Common myeloid progenitor, CD34-positive (primary cell): ENCODE measurements at regions of chr9 and their contacts with region 1.

Region 1: DNA sequence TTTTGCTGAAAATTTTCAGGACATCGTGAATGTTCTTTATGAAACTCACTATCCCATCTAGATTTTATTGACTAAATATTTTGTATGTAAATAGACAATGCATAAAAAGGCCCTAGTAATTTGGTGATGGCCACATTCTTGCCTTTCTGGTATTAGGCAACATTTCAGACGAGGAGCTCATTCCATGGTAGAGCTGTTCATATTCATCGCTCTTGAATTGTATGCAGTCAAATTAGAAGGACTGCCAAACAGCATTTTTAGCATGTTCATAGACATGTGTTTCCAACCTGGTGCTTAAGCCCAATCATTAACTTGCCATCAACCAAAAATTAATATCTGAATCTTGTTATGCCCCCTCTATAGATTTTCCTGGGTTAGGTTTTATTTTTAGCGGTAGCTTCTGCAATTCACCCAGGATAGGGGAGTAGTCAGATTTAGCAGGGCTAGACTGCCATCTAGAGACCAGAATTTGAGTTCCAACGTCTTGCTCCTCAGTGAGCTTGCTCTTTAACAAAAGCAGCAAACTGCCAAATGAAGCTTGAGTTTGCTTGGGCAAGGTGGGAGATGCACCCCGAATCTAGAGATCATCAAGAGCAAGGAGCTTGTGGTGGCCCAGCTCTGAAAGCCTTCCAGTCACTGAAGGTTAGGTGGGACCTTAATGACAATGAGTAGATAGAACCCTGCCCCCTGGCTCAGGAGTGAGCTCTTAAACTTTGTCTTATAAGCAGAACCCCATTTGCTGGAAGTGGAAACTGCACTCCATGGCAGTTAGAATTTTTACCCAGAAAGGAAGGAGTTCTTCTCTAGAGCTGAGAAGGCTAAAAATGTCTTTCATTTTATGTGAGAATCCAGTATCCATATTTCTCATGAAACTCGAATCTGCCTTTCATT is 456.2 kb downstream of the RASEF start:
- DNase-seq: peak; percentile 63 to 82 (median 77)
- H3K4me3 ChIP-seq: no peak overlapping the region
- H3K27ac ChIP-seq: no peak overlapping the region
- H3K4me1 ChIP-seq: no peaks in the 10 kb centered on the region
- H3K27me3 ChIP-seq: no peaks in the 10 kb centered on the region

Region 2: DNA sequence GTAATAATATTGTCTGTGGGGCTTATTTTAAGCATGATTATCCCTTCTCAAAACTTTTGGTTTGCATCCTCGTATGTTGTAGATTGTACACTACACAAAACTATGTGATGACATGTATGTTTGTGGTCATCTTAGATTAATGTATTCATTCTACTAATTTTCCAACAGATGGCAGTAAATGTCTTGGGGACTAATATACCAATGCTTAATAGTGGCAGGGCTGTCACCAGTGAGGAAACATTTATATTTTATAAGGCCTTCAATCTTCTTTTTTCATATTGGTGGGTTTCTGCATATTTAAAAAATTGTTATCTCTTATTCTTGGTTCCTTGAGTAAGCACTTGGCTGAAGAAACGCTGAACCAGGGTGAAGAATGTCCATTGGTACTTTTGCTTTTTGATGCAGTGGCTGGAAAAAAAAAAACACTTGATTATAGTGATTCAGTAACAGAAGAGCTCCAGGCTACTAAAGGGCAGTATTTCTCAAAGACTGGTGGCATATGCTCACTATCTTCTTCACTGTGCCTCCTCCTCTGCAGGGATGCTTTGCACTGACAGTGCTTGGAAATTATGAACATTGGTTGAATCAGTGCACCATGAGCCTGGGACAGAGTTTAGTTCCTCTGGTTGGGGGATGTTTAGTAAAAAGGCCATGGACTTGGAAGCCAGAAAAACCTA is 74.1 kb before region 1 on chr9:
- CTCF ChIA-PET with region 1: interaction called, 32 read pairs
- POLR2A ChIA-PET with region 1: no interaction called
- DNase-seq: peak; percentile 14 to 48 (median 40)
- H3K4me3 ChIP-seq: no peak overlapping the region
- H3K27ac ChIP-seq: no peak overlapping the region
- H3K4me1 ChIP-seq: peaks cover 0 to 11% (median 1%) of the 10 kb centered on the region in 4 experiments
- H3K27me3 ChIP-seq: no peaks in the 10 kb centered on the region

Region 3: DNA sequence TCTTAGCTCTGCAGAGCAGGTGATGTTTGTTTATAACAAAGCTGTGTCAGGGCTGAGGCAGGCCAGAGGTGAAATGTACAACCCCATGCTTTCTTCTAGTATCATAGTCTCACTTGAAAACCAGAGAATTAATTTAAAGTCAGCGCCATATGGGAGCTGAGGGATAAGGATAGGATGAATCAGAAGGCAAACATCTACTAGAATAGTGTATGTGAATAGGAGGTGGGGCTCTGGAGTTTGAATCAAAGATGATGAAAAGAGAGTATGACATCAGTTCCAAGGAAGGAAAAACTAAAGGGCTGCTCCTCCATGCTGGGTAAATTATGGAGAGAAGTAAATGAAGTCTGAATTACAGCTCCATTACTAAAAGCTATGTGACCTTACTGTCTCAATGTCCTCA is 14.7 kb after region 1 on chr9:
- CTCF ChIA-PET with region 1: interaction called, 11 read pairs
- POLR2A ChIA-PET with region 1: no interaction called
- DNase-seq: no peak
- H3K4me3 ChIP-seq: no peak overlapping the region
- H3K27ac ChIP-seq: no peak overlapping the region
- H3K4me1 ChIP-seq: no peaks in the 10 kb centered on the region
- H3K27me3 ChIP-seq: no peaks in the 10 kb centered on the region